Endothelial cell of umbilical vein (primary cell): ENCODE measurements at regions of chr17 and their contacts with region 1.

Region 1: DNA sequence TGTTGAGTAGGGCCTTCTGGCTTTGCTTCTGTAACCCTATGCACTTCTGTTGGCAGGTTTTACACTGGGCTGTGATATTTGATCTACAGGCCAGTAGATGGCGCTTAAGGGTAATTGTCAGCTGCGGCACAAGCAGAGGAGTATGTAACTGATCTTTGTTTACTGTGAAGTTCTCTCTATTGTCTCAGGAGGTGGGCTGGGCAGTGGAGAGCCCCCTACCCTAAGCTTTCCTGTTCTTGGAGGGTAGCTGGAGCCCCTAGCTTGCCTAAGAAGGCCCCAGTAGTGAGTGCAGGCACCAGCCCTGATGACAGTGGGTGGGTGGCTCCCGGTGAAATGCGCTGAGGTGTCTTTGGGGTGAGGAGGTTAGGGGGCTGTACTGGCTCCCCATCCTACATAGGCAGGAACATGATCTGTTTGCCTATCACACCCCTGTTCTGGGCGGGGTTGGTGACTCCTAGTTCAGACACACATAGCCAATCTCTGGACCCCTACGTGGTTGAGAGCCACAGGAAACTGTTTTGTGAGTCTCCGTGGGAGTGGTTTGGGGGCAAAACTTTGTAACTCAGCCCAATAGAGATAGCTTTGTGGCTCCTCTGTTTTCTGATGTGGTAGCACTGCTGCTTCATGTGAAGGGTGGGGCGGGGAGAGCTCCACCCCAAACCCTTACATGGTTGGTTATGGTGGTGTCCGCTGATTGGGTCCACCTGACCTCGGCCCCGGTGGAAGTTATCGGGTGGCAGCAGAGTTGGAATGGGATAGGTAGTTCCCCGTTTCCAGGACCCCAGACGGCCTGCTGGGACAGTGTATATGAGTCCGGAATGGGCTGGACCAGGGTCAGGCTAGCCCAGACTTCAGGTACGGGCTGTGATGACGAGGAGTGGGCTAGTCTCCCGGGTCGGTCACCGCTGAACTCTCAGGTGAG is 60.4 kb downstream of the SLFN11 start:
- DNase-seq: peak; percentile 71
- H3K4me3 ChIP-seq: no peak overlapping the region
- H3K27ac ChIP-seq: no peak overlapping the region
- H3K4me1 ChIP-seq: peaks cover 3% of the 10 kb centered on the region
- H3K27me3 ChIP-seq: no peaks in the 10 kb centered on the region
- CTCF ChIP-seq: peak; percentile 67
- POLR2A ChIP-seq: no peak

Region 2: DNA sequence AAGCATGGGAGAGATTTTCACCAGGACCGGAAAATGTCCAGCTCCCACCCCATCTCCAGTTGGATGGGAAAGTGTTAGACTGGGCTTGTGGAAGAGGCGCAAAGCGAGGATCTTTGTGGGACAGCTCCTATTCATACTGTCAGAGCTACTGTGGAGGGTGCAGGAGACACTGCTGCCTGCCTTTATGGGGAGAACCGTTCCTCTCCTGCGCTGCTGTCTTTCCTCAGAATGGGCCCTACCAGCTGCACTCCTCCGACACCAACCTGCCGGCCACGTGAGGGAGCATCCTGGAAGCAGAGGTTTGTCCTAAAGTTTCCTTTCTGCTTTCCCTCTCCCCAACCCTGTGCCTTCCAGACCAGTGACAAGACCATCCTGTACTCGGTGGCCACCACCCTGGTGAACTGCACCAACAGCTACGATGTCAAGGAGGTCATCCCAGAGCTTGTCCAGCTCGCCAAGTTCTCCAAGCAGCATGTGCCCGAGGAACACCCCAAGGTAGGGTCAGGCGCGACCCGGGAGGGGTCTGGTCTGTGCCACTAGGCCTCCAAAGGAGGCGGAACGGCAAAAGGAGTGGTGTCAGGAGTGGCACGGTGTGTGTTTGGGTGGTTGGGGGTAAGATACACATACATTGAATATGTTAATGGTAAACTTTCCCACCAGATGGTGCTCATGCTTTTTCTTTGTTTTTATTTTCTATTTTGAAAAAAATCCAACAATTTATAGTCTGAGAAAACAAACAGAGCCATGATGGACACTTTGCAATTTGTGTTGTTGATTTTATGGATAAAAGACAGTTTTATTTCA is 141.9 kb before region 1 on chr17:
- CTCF ChIA-PET with region 1: interaction called, 7 read pairs
- POLR2A ChIA-PET with region 1: no interaction called
- dilution Hi-C with region 1: no loop called
- intact Hi-C with region 1: loop called (anchors 1 kb)
- DNase-seq: peak; percentile 53
- H3K4me3 ChIP-seq: no peak overlapping the region
- H3K27ac ChIP-seq: no peak overlapping the region
- H3K4me1 ChIP-seq: no peaks in the 10 kb centered on the region
- H3K27me3 ChIP-seq: peaks cover 0 to 3% of the 10 kb centered on the region in 2 experiments
- CTCF ChIP-seq: no peak
- POLR2A ChIP-seq: no peak

Region 3: GRCh38 chr17:35345926-35346771 is 33.1 kb after region 1 on chr17:
- CTCF ChIA-PET with region 1: interaction called, 10 read pairs
- POLR2A ChIA-PET with region 1: interaction called, 3 read pairs
- dilution Hi-C with region 1: no loop called
- intact Hi-C with region 1: loop called (anchors 2 kb)
- DNase-seq: peak; percentile 45
- H3K4me3 ChIP-seq: peak overlapping the region in 2 of 3 experiments; percentile 13 to 46
- H3K27ac ChIP-seq: no peak overlapping the region
- H3K4me1 ChIP-seq: peaks cover 10% of the 10 kb centered on the region
- H3K27me3 ChIP-seq: peaks cover 3 to 8% of the 10 kb centered on the region in 2 experiments
- CTCF ChIP-seq: no peak
- POLR2A ChIP-seq: no peak